Motor neuron (in vitro differentiated cells): ENCODE measurements at regions of chr9 and their contacts with region 1.

Region 1: DNA sequence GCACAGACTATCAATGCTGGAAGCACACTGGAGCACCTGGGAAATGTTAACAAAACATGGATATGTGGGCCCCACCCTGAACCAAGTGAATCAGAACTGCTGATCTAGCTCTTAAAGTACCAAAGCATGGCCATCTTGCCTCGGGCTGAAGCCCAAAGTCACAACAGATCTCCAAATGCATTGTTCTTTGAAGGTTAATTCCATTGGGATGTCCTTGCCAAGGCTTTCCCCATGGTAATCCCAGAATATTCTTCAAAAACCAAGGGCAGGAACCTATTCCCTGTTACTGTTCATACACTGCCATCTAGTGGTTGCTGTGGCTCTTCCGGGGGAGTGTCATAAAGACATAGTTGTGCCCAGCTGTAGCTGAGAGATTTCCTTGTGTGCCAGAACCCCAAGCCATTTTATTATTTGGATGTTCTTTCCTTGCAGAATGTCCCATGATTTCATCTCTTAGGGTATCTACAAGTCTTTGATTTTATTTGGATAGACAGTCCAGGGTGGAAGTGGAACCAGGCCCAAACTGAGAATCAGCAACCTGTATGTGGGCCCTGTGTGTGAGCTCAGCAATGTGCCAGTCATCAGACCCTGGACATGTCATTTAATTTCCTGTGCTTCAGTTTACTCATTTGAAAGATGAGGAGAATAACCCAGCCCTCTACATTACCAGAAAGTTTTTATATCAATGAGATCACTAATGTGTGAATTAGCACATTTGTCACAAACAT is 290.0 kb downstream of the ACTL7B start:
- ATAC-seq: peak; percentile 89 to 100 (median 92)
- H3K4me3 ChIP-seq: no peak overlapping the region
- H3K27ac ChIP-seq: no peak overlapping the region
- H3K4me1 ChIP-seq: no peaks in the 10 kb centered on the region

Region 2: GRCh38 chr9:107465467-107466451 is 1100.1 kb before region 1 on chr9:
- in situ Hi-C with region 1: loop called in 8 of 9 experiments (anchors 10 to 25 kb)
- ATAC-seq: peak; percentile 97 to 99 (median 99)
- H3K4me3 ChIP-seq: peak overlapping the region; percentile 49 to 56 (median 53)
- H3K27ac ChIP-seq: no peak overlapping the region
- H3K4me1 ChIP-seq: no peaks in the 10 kb centered on the region

Region 3: GRCh38 chr9:107472581-107473340 is 1093.1 kb before region 1 on chr9:
- in situ Hi-C with region 1: loop called (anchors 10 to 25 kb)
- ATAC-seq: peak in 1 of 8 experiments; percentile 30
- H3K4me3 ChIP-seq: no peak overlapping the region
- H3K27ac ChIP-seq: no peak overlapping the region
- H3K4me1 ChIP-seq: no peaks in the 10 kb centered on the region

Region 4: GRCh38 chr9:107489687-107490605 is 1075.9 kb before region 1 on chr9 and contains the start of gene KLF4:
- in situ Hi-C with region 1: loop called in 1 of 9 experiments (anchors 25 kb)
- ATAC-seq: peak; percentile 55 to 82 (median 78)
- H3K4me3 ChIP-seq: peak within 1 kb of the TSS; percentile 40 to 57 (median 49)
- H3K27ac ChIP-seq: no peak within 1 kb of the TSS
- H3K4me1 ChIP-seq: peaks cover 3 to 5% of the 10 kb centered on the region in 2 donors
- total RNA-seq, gene KLF4: 0.29 to 285 (median 10.0) TPM

Region 5: DNA sequence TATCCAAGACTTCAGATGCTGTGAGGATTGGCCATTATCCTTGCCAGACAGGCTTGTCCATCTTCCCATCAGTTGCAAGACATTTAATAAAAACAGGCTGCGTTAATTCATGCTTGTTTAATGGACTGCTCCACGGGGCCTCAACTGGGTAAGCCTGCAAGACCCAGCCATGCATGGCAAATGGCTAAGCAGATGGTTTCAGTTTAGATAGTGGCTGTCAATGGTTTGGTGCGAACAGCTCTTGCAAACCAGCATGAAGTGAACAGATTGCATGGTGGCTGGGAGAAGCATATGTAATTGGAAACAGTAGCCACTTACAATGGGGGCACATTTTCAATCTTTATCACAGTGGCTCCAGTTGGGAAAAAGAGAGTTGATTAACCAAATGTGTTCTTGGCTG is 448.0 kb before region 1 on chr9:
- in situ Hi-C with region 1: loop called in 1 of 9 experiments (anchors 25 kb)
- ATAC-seq: peak in 3 of 8 experiments; percentile 54 to 78 (median 71)
- H3K4me3 ChIP-seq: no peak overlapping the region
- H3K27ac ChIP-seq: no peak overlapping the region
- H3K4me1 ChIP-seq: no peaks in the 10 kb centered on the region

Region 6: DNA sequence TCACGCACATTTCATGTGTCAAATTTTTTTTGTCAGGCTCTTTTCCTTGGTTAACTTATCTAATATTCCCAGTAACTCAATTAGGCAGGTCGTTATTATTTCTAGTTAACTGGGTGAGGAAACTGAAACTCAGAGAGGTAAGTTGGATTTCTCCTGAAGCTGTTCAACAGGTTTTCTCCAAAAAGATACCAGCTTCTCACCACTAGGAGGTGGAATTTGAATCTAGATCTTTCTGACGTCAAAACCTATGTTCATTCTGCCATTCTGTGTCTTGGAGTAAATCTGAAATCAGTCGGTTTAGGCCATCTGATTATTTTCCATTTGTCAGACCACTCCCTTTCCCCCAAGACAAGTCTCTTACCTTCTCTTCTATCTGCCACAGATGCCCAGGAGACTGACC is 282.9 kb before region 1 on chr9:
- in situ Hi-C with region 1: loop called in 2 of 9 experiments (anchors 25 kb)
- ATAC-seq: no peak
- H3K4me3 ChIP-seq: no peak overlapping the region
- H3K27ac ChIP-seq: no peak overlapping the region
- H3K4me1 ChIP-seq: no peaks in the 10 kb centered on the region

Region 7: GRCh38 chr9:108468402-108468801 is 97.4 kb before region 1 on chr9:
- in situ Hi-C with region 1: loop called in 1 of 9 experiments (anchors 25 kb)
- ATAC-seq: peak in 3 of 8 experiments; percentile 36 to 45 (median 44)
- H3K4me3 ChIP-seq: no peak overlapping the region
- H3K27ac ChIP-seq: no peak overlapping the region
- H3K4me1 ChIP-seq: peaks cover 0 to under 1% of the 10 kb centered on the region in 2 donors